HEK293T (cell line): ENCODE measurements at regions of chr1 and their contacts with region 1.

Region 1: GRCh38 chr1:115706587-115707425 is 61.7 kb downstream of the CASQ2 start:
- DNase-seq: peak; percentile 67

Region 2: GRCh38 chr1:115648717-115649691 is 57.8 kb before region 1 on chr1:
- CTCF ChIA-PET with region 1: interaction called, 13 read pairs
- POLR2A ChIA-PET with region 1: interaction called, 3 read pairs
- DNase-seq: no peak

Region 3: GRCh38 chr1:115717541-115717940 is 10.7 kb after region 1 on chr1:
- CTCF ChIA-PET with region 1: interaction called, 12 read pairs
- POLR2A ChIA-PET with region 1: no interaction called
- DNase-seq: peak; percentile 37

Region 4: DNA sequence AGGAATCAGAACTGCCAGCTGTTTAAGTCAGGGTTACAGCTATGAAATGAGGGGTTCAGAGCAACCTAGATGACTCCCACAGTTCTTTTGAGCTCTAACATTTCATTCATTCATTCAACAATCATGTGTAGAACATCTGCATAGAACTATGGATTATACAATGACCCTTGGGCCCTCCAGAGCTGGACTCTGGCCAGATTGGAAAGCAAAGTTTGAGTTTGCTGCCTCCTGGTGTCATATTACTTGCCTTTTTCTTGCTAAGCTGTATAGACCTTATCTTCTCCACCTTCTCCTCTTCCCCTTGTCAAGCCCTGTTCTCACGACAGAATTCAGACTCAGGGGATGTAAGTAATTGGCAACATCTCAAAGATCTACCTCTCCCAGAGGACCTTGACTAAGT is 57.7 kb after region 1 on chr1:
- CTCF ChIA-PET with region 1: interaction called, 16 read pairs
- POLR2A ChIA-PET with region 1: no interaction called
- DNase-seq: peak; percentile 40

Region 5: DNA sequence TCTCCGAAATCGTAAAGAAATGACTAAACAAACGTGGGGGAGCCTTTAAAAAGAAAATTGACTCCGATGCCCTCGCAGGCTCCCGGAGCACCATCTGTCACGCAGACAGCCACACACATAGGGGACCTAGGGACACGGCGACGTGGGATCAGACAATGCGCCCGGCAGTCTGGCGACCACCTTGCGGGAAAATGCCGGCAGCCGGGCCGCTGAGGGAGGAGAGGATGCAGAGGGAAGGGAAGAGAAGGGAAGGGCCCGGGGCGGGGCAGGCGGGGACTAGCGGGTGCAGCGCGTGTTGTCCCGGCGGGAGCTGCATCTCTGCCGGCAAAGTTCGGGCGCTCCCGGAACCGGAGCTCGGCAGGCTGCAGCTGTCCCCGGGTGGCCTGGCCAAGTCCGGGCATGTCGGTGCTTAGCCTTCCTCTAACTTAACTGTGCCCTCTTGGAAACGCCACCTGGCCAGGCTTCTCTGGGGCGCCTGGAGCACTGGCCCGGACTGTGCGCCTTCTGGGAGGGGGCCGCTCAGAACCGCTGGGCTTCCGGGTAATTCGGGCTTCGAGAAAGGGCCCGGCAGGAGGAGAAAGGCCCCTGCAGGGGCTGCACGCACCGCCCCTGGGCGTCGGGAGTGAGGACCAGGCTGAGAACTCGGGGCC is 132.3 kb after region 1 on chr1:
- CTCF ChIA-PET with region 1: no interaction called
- POLR2A ChIA-PET with region 1: no interaction called
- DNase-seq: peak; percentile 66